Activated CD4-positive, alpha-beta T cell treated with anti-CD3 and anti-CD28 coated beads for 36 hours (primary cell): ENCODE measurements at regions of chr12 and their contacts with region 1.

Region 1: GRCh38 chr12:29317556-29318363 is 63.2 kb downstream of the ERGIC2 start:
- DNase-seq: peak; percentile 63
- ATAC-seq: peak; percentile 100
- H3K4me3 Mint-ChIP-seq: no peak overlapping the region
- H3K27ac Mint-ChIP-seq: no peak overlapping the region
- H3K4me1 Mint-ChIP-seq: peaks cover 6% of the 10 kb centered on the region
- H3K27me3 Mint-ChIP-seq: no peaks in the 10 kb centered on the region

Region 2: DNA sequence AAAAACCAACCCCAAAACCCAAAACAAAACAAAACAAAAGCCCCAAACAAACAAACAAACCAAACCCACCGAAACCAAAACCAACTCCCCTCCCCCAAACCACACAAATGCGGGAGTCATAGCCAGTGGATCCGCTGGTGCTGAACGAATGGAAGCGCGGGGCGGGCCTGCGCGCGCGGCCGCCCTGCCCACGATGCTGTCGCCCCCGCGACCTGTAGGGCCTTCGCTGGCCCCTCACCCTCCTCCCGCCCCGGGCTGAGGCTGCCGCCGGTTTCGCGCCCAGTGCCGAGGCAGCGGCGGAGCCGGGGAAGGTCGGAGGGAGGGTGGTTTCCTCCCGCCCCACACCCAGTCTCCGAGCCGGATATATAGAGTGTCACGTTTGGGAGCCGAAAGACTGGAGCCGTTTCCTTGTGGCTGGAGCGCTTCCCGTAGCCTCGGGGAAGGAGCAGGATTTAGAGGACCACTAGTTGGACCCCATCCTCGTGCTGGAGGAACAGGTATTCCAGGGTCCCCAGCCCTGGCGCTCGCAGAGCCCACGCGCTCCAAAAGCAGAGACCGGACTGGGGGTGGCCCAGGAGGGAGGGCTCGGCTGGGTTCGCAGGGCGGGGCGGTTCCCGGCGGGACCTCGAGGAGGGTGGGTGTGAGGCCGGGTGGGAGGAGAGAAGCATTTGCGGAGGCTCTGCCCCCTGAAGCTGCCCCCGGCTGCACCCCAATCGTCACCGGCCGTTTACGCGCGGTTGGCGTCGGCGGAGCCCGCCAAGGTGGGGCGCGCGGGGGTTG is 168.7 kb before region 1 on chr12 and contains the start of gene FAR2:
- CTCF ChIA-PET with region 1: no interaction called
- POLR2A ChIA-PET with region 1: interaction called, 4 read pairs
- intact Hi-C with region 1: loop called in 1 of 2 experiments (anchors 1 kb)
- DNase-seq: peak; percentile 59
- ATAC-seq: peak; percentile 77
- H3K4me3 Mint-ChIP-seq: peak within 1 kb of the TSS; percentile 81
- H3K27ac Mint-ChIP-seq: peak within 1 kb of the TSS; percentile 85
- H3K4me1 Mint-ChIP-seq: peaks cover 16% of the 10 kb centered on the region
- H3K27me3 Mint-ChIP-seq: peaks cover 14% of the 10 kb centered on the region
- total RNA-seq, gene FAR2: 7.8 to 8.1 TPM

Region 3: GRCh38 chr12:29160230-29160629 is 157.5 kb before region 1 on chr12:
- CTCF ChIA-PET with region 1: no interaction called
- POLR2A ChIA-PET with region 1: no interaction called
- intact Hi-C with region 1: no loop called
- DNase-seq: peak; percentile 17
- ATAC-seq: peak; percentile 75
- H3K4me3 Mint-ChIP-seq: no peak overlapping the region
- H3K27ac Mint-ChIP-seq: peak overlapping the region; percentile 29
- H3K4me1 Mint-ChIP-seq: peaks cover 19% of the 10 kb centered on the region
- H3K27me3 Mint-ChIP-seq: no peaks in the 10 kb centered on the region

Region 4: DNA sequence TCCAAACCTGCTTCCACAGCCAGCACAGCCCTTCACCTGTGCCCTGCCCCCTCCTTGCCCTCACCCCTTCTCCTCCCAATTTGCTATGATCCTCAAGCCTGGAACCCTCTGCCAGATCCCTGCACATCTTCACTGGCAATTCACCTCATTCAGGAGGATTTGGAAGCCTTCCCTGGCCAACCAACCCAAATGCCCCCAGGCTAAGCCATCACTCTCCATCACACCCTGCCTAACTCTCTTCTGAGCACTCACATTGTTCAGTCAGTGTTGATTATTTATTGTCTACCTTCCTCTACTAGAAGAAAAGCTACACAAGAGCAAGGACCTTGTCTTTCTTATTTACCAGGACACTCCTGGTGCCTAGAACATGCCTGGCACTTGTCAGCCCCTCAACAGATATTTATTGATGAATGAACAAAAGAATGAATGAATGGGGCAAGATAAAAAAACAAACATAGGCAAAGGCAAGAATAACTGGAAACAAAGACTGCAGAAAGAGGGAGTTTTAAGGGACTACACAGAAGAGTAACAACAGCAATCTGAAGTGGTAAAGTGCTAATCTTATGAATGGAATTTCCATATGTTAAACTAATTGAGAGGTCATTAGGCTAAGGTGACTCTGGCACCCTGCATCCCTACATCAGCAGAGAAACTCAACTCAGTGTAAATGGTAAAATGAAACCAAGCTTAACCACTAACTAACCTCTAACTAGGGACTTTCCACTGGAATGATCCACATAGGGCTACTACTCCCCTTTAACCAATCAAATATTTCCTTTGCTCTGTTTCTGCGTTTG is 432.6 kb after region 1 on chr12:
- CTCF ChIA-PET with region 1: no interaction called
- POLR2A ChIA-PET with region 1: no interaction called
- intact Hi-C with region 1: no loop called
- DNase-seq: no peak
- ATAC-seq: no peak
- H3K4me3 Mint-ChIP-seq: no peak overlapping the region
- H3K27ac Mint-ChIP-seq: no peak overlapping the region
- H3K4me1 Mint-ChIP-seq: no peaks in the 10 kb centered on the region
- H3K27me3 Mint-ChIP-seq: peaks cover 7% of the 10 kb centered on the region